ENCODE measurements at regions of chr13 and their contacts with region 1.

Region 1: DNA sequence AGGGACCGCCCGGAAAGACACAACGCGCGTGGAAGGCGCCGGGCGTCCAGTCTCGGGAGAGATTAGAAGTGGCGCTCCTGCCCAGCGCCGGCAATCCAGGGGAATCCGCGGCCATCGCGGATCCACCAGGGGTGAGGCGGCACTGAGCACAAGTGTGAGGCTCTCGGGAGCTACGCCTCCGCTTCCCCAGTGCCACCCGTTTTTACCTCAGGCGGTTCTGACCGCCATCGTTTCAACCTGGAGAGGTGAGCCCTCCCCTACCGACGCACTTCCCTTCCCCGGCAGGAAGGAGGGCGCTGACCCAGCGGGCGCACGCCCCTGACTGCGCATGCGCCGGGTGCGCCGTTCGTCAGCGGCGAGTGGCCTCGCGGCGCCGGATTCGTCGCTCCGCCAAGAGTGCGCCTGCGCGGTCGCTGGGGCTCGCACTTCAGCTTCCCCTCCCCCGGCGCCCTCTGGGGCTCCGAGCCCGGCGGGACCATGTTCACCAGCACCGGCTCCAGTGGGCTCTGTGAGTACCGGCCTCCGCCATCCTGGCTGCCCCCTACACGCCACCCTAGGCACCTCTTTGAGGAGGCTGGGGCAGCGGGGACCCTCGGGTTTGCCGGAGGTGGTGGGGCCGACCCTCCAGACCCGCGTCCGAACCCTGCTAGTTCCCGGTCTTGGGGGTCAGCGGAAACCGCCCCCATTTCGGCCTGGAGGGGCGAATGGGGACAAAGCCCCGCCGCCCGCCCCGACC is at the start of gene UBAC2:
- DNase-seq: peak; percentile 95
- ATAC-seq: peak; percentile 79
- H3K4me3 Mint-ChIP-seq: peak within 1 kb of the TSS; percentile 92
- H3K27ac Mint-ChIP-seq: peak within 1 kb of the TSS; percentile 94
- H3K4me1 Mint-ChIP-seq: peaks cover 62% of the 10 kb centered on the region
- H3K27me3 Mint-ChIP-seq: no peaks in the 10 kb centered on the region
- CTCF ChIP-seq: no peak
- total RNA-seq, gene UBAC2: 63.7 to 68.4 TPM

Region 2: GRCh38 chr13:99185606-99186005 is 15.0 kb before region 1 on chr13:
- CTCF ChIA-PET with region 1: interaction called, 10 read pairs
- POLR2A ChIA-PET with region 1: interaction called, 16 read pairs
- intact Hi-C with region 1: no loop called
- DNase-seq: no peak
- ATAC-seq: no peak
- H3K4me3 Mint-ChIP-seq: no peak overlapping the region
- H3K27ac Mint-ChIP-seq: no peak overlapping the region
- H3K4me1 Mint-ChIP-seq: peaks cover 3% of the 10 kb centered on the region
- H3K27me3 Mint-ChIP-seq: no peaks in the 10 kb centered on the region
- CTCF ChIP-seq: no peak

Region 3: DNA sequence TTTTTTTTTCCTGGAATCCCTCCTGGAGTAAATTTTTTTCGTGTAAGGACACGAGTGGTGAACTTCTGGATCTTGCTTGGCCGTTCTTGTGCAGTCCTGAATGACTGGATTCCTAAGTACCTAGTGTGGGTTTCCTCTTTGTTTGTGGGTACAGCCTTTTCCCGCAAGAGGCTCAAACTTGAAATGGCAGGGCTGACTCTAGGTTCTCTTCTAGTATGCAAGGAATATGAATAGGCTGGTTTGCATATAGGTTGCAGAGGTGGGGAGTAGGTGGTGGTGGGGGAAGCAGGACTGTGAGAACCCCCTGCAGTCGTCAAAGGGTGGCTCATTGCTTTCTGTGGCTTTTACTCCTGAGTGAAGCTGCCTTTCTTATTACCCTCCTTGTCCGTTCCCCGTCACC is 13.6 kb after region 1 on chr13:
- CTCF ChIA-PET with region 1: interaction called, 17 read pairs
- POLR2A ChIA-PET with region 1: interaction called, 91 read pairs
- intact Hi-C with region 1: loop called (anchors 2 kb)
- DNase-seq: peak; percentile 84
- ATAC-seq: peak; percentile 72
- H3K4me3 Mint-ChIP-seq: peak overlapping the region; percentile 74
- H3K27ac Mint-ChIP-seq: peak overlapping the region; percentile 91
- H3K4me1 Mint-ChIP-seq: peaks cover 80% of the 10 kb centered on the region
- H3K27me3 Mint-ChIP-seq: no peaks in the 10 kb centered on the region
- CTCF ChIP-seq: no peak

Region 4: DNA sequence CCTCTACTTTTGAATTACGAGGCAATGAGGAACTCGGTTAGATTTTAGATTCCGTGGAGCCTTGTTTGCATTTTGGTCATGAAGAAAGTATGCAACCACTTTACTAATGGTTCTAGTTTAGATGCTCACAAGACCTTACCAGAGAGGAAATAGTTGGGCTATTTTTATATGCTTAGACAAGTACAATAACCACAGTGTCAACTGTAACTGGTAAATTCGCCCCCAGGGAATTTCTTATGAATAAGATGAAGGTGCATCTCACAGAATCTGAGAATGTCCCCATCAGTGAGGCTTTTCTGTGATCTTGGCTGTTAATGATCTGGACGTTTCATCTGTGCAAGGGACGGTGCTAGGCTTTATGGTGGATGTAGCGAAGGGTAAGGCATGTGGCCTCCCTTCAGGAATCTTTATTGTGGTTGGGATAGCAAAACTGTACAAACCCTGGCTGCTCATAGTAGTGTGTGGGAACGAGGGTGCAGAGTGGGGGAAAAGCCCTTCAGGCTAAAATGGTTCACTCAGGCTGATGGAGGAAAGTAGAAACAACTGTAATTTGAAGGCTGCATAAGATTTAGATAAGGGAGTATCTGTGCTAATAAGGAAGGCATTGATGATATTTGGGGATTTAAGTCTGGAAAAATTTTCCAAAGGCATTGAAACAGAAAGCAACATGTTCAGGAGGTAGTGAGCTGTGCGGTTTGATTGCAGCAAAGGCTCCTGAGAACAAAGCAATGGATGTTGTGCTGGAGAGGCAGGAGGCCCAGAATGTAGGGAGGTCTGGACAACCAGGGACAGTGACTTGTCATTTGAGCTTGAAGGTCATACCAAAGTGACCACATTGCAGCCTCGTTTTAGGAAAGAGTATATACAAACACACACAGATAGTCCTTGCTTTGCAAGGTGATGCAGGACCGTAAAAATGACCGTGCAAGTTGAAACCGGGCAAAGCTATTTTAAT is 28.4 kb after region 1 on chr13:
- CTCF ChIA-PET with region 1: interaction called, 14 read pairs
- POLR2A ChIA-PET with region 1: interaction called, 10 read pairs
- intact Hi-C with region 1: no loop called
- DNase-seq: peak; percentile 31
- ATAC-seq: peak; percentile 64
- H3K4me3 Mint-ChIP-seq: peak overlapping the region; percentile 70
- H3K27ac Mint-ChIP-seq: peak overlapping the region; percentile 92
- H3K4me1 Mint-ChIP-seq: peaks cover 77% of the 10 kb centered on the region
- H3K27me3 Mint-ChIP-seq: no peaks in the 10 kb centered on the region
- CTCF ChIP-seq: no peak

Region 5: GRCh38 chr13:99250982-99251825 is 50.6 kb after region 1 on chr13:
- CTCF ChIA-PET with region 1: interaction called, 44 read pairs
- POLR2A ChIA-PET with region 1: interaction called, 18 read pairs
- intact Hi-C with region 1: no loop called
- DNase-seq: no peak
- ATAC-seq: peak; percentile 17
- H3K4me3 Mint-ChIP-seq: no peak overlapping the region
- H3K27ac Mint-ChIP-seq: peak overlapping the region; percentile 67
- H3K4me1 Mint-ChIP-seq: peaks cover 63% of the 10 kb centered on the region
- H3K27me3 Mint-ChIP-seq: no peaks in the 10 kb centered on the region
- CTCF ChIP-seq: no peak

Region 6: GRCh38 chr13:99258210-99258860 is 57.7 kb after region 1 on chr13 and contains the start of gene GPR18:
- CTCF ChIA-PET with region 1: interaction called, 168 read pairs
- POLR2A ChIA-PET with region 1: interaction called, 22 read pairs
- intact Hi-C with region 1: loop called (anchors 2 kb)
- DNase-seq: peak; percentile 66
- ATAC-seq: peak; percentile 74
- H3K4me3 Mint-ChIP-seq: peak within 1 kb of the TSS; percentile 84
- H3K27ac Mint-ChIP-seq: peak within 1 kb of the TSS; percentile 98
- H3K4me1 Mint-ChIP-seq: peaks cover 66% of the 10 kb centered on the region
- H3K27me3 Mint-ChIP-seq: no peaks in the 10 kb centered on the region
- CTCF ChIP-seq: no peak
- total RNA-seq, gene GPR18: 11.4 to 11.6 TPM

Measured in activated CD8-positive, alpha-beta T cell treated with anti-CD3 and anti-CD28 coated beads for 36 hours (primary cell).